ENCODE measurements at regions of chr10 and their contacts with region 1.

Region 1: GRCh38 chr10:3902054-3902808 is 117.2 kb upstream of the KLF6 start:
- DNase-seq: no peak
- H3K4me3 ChIP-seq: no peak overlapping the region
- H3K27me3 ChIP-seq: no peaks in the 10 kb centered on the region
- CTCF ChIP-seq: no peak

Region 2: GRCh38 chr10:3708852-3709251 is 193.4 kb before region 1 on chr10:
- CTCF ChIA-PET with region 1: no interaction called
- POLR2A ChIA-PET with region 1: no interaction called
- DNase-seq: no peak
- H3K4me3 ChIP-seq: no peak overlapping the region
- H3K27me3 ChIP-seq: no peaks in the 10 kb centered on the region
- CTCF ChIP-seq: no peak

Region 3: DNA sequence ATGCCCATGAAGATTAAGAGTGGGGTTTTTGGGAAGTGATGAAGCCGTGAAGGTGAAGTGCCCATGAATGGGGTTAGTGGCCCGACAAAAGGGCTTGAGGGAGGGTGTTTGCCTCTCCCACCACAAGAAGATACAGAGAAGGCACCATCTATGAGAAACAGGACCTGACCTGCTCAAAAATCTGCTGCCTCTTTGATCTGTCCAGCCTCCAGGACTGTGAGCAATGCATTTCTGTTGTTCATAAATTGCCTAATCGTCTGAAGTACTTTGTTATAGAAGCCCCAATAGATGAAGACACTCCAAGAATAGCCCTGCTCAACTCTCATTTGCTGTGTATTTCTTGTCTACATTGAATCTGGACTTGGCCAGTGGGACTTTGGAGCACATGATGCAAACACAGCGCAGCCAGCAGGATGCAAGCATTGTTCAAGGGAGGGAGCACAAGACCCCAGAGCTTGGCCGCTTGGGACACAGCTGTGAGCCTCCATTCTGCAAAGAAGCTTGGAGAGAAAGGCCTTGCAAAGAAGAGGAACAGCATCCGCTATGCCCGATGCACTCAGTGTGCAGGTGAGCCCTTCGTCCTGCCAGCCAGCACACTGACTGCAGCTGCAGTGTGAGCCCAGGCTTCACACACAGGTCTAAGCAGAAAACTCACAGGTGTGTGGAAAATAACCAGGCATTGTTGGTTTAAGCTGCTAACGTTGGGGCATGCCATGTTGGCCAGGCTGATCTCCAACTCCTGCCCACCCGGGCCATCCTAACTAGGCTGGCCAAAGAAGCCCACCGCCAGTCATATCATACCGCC is 44.0 kb before region 1 on chr10:
- CTCF ChIA-PET with region 1: no interaction called
- POLR2A ChIA-PET with region 1: interaction called, 10 read pairs
- DNase-seq: no peak
- H3K4me3 ChIP-seq: no peak overlapping the region
- H3K27me3 ChIP-seq: no peaks in the 10 kb centered on the region
- CTCF ChIP-seq: no peak